Left cardiac atrium (tissue), 4 donors: ENCODE measurements at regions of chr9 and their contacts with region 1.

Region 1: GRCh38 chr9:6055213-6055612 is 39.8 kb upstream of the RANBP6 start:
- DNase-seq: no peak
- ATAC-seq: peak; percentile 70 to 91

Region 2: DNA sequence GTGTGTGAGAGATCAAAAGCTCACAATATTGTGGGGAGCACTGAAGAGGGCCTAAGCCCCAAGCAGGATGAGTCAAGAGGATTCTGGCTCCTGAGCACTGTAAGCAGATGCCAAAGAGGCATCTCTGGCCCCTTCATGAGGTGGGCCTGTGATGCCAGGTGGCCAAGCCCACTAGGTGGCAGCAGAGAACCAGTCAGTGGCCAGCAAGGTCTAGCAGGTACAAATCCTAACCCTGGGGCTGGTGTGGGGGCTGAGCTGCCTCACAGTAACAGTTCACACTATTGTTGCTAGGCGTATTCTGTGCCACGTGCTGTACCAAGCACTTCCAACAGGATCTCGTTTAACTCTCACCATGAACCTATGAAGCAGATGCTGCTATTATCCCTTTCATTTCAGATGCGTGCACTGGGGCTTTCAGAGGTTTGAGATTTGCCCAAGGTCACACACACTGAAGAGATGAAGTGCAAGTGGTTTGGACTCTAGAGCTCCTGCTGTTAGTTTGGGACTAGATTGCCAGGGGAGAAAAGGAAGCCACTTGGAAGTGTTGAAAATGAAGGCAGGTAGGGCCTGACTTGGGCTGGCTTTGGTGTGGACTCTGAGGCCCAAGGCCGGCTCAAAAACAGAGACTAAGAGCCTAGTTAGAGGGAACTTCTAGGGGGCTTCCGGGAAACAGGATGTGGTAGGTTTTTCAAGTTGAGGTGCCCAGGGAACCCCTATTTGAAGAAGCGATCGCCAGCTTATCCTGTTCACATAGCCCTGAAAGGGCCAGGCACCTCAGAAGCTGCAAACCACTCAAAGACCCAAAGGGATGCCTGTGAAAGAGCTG is 168.9 kb before region 1 on chr9:
- intact Hi-C with region 1: loop called (anchors 1 to 5 kb)
- DNase-seq: peak; percentile 77
- ATAC-seq: peak; percentile 86 to 93

Region 3: GRCh38 chr9:5949103-5949699 is 106.0 kb before region 1 on chr9:
- intact Hi-C with region 1: no loop called
- DNase-seq: no peak
- ATAC-seq: peak in 1 of 2 donors; percentile 37

Region 4: GRCh38 chr9:5971740-5972139 is 83.5 kb before region 1 on chr9:
- intact Hi-C with region 1: no loop called
- DNase-seq: no peak
- ATAC-seq: no peak

Region 5: DNA sequence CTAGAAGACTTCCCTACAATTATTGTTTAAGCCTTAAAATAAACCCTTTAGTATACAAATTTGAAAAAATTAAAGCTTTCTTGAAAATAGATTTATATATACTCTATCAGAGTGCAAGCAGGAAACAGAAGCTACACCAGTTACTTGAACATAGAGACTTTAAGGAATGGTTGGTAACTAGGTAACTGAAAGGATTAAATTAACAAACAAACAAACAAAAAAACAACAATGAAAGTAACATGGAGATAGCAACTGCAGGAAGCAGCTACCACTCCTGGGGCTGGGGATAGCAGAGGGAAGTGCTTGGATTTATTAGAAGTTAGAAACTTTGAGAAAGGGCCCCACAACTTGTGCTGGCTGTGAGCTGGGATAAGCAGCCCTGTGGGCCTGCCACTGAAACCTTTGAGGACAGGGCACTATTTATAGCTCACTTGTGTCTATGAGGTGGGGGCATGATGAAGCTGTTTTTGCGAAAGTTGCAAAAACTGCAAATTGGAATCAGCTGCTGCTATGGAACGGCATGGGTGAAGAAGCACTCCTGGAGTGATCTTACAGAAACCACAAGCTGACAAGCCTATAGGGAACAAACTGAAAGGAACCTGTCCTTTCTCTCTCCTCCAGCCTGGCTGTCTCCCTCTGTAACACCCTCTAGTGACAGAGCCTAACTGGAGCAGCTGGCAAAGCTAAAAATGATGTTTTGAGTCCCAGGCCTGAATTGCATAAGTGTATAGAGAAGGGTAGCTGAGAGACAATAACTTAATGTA is 51.5 kb after region 1 on chr9:
- intact Hi-C with region 1: loop called in 1 of 2 experiments (anchors 5 kb)
- DNase-seq: no peak
- ATAC-seq: peak; percentile 68 to 92